ENCODE measurements at regions of chr22 and their contacts with region 1.

Region 1: GRCh38 chr22:41285820-41286638 is at the start of gene RANGAP1:
- DNase-seq: peak; percentile 99
- H3K4me3 Mint-ChIP-seq: peak within 1 kb of the TSS; percentile 94
- H3K27ac Mint-ChIP-seq: peak within 1 kb of the TSS; percentile 99
- H3K4me1 Mint-ChIP-seq: peaks cover 41% of the 10 kb centered on the region
- H3K27me3 Mint-ChIP-seq: no peaks in the 10 kb centered on the region
- total RNA-seq, gene RANGAP1: 98.7 to 99.7 TPM

Region 2: GRCh38 chr22:40856513-40857308 is 429.3 kb before region 1 on chr22 and contains the starts of genes ST13 and XPNPEP3:
- CTCF ChIA-PET with region 1: no interaction called
- POLR2A ChIA-PET with region 1: interaction called, 14 read pairs
- DNase-seq: peak; percentile 97
- H3K4me3 Mint-ChIP-seq: peak within 1 kb of the TSS; percentile 95
- H3K27ac Mint-ChIP-seq: peak within 1 kb of the TSS; percentile 99
- H3K4me1 Mint-ChIP-seq: peaks cover 50% of the 10 kb centered on the region
- H3K27me3 Mint-ChIP-seq: no peaks in the 10 kb centered on the region
- total RNA-seq, gene ST13: 138 to 142 TPM
- total RNA-seq, gene XPNPEP3: 11.3 to 13.2 TPM

Region 3: DNA sequence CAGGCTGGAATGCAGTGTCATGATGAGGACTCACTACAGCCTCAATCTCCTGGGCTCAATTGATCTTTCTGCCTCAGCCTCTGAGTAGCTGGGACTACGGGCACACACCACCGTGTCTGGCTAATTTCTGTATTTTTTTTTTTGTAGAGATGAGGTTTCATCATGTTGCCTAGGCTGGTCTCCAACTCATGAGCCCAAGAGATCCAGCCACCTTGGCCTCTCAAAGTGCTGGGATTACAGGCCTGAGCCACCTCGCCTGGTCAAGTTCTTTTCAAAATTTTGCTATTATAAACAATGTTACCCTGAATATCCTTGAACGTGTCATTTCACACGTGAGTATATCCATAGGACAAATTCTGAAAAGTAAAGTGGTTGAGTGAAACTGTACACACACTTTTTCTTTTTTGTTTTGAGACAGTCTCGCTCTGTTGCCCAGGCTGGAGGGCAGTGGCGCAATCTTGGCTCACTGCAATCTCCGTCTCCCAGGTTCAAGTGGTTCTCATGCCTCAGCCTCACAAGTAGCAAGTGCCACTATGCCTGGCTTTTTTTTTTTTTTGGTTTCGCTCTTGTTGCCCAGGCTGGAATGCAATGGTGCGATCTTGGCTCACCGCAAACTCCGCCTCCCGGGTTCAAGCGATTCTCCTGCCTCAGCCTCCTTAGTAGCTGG is 215.2 kb before region 1 on chr22:
- CTCF ChIA-PET with region 1: no interaction called
- POLR2A ChIA-PET with region 1: interaction called, 10 read pairs
- DNase-seq: no peak
- H3K4me3 Mint-ChIP-seq: no peak overlapping the region
- H3K27ac Mint-ChIP-seq: no peak overlapping the region
- H3K4me1 Mint-ChIP-seq: peaks cover 10% of the 10 kb centered on the region
- H3K27me3 Mint-ChIP-seq: no peaks in the 10 kb centered on the region

Region 4: DNA sequence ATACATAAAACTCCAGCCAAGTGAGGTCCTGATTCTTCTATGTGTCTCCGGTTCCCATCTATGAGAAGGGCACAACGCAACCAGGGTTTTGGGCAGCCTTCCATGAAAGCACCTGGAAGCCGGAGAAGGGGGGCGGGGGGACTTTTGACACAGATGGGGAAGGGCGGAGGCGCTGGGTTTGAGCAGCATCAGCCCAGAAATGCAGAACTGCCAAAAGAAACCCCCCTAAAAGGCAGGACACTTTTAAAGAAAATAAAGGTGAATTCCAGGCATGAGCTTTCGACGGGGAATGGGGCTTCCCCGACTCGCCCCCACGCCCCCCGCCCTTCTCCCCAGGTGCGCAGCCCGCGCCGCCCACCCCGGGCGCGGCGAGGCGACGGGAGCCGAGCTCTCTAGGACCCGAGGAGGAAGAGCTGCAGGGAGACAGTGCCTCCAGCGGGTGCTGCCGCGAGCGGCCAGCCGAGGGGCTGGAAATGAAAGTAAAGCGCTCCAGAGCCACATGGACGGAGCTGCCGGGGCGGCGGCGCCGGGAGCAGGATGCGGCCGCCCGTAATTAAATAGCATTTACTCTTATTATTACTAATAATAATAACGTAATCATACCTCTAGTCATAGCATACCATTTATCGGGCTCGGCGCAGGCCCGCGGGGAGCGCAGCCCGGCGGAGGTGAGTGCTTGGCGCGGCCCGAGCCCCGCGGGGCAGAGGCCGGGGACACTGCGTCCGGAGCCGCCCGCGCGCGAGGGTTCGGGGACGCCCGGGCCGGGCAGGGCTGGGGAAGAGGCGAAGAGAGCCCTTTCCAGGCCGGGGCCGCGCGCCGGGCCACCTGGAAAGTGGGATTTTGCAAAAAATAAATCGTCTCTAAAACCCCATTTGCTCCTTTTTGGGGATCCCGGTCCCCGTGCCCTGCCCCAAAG is 15.3 kb after region 1 on chr22 and contains the start of gene ZC3H7B:
- CTCF ChIA-PET with region 1: interaction called, 11 read pairs
- POLR2A ChIA-PET with region 1: interaction called, 117 read pairs
- DNase-seq: peak; percentile 87
- H3K4me3 Mint-ChIP-seq: peak within 1 kb of the TSS; percentile 74
- H3K27ac Mint-ChIP-seq: peak within 1 kb of the TSS; percentile 72
- H3K4me1 Mint-ChIP-seq: peaks cover 29% of the 10 kb centered on the region
- H3K27me3 Mint-ChIP-seq: no peaks in the 10 kb centered on the region
- total RNA-seq, gene ZC3H7B: 41.7 to 42.1 TPM

Region 5: DNA sequence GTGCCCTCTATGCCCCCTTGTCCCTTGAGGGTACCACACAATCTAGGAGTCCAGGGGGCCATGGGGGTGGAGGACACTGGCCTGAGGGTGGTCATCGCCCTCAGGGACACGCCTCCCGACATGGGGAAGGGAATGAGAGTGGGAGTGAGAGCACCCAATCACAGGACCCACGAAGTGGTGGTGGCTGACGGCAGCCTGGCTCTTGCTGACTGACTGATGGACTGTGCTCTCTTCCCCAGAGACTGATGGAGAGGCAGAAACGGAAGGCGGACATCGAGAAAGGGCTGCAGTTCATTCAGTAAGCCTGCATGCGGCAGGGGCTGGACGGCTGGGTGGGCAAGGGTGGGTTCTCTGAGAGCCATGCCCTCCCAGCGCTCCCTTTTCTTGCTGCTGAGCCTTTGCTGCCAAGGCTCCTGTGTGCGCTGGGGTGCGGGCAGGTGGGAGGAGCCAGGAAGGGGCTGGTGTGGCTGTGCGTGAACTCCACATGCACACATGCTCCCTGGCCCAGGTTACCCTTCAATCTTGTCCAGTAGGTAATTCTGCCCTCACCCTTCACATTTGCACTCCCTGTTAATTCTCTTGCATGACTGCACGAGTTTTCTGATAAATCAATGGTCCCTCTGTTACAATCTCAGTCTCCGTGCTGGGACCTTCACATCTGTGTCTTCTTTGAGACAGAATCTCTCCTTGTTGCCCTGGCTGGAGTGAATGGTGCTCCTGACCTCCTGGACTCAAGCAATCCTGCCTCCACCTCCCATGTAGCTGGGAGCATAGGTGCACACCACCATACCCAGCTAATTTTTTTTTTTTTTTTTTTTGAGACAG is 34.6 kb after region 1 on chr22:
- CTCF ChIA-PET with region 1: no interaction called
- POLR2A ChIA-PET with region 1: no interaction called
- DNase-seq: no peak
- H3K4me3 Mint-ChIP-seq: no peak overlapping the region
- H3K27ac Mint-ChIP-seq: no peak overlapping the region
- H3K4me1 Mint-ChIP-seq: peaks cover 4% of the 10 kb centered on the region
- H3K27me3 Mint-ChIP-seq: no peaks in the 10 kb centered on the region

Region 6: GRCh38 chr22:41448189-41448808 is 162.3 kb after region 1 on chr22:
- CTCF ChIA-PET with region 1: no interaction called
- POLR2A ChIA-PET with region 1: interaction called, 24 read pairs
- DNase-seq: peak; percentile 94
- H3K4me3 Mint-ChIP-seq: peak overlapping the region; percentile 95
- H3K27ac Mint-ChIP-seq: peak overlapping the region; percentile 93
- H3K4me1 Mint-ChIP-seq: peaks cover 22% of the 10 kb centered on the region
- H3K27me3 Mint-ChIP-seq: no peaks in the 10 kb centered on the region